ENCODE measurements at regions of chr3 and their contacts with region 1.

Region 1: GRCh38 chr3:49411968-49412631 is at the starts of genes RHOA and TCTA:
- DNase-seq: peak; percentile 98
- H3K4me3 Mint-ChIP-seq: peak within 1 kb of the TSS; percentile 91
- H3K27ac Mint-ChIP-seq: peak within 1 kb of the TSS; percentile 100
- H3K4me1 Mint-ChIP-seq: peaks cover 35% of the 10 kb centered on the region
- H3K27me3 Mint-ChIP-seq: no peaks in the 10 kb centered on the region
- CTCF ChIP-seq: no peak
- total RNA-seq, gene RHOA: 313 and 352 TPM in 2 replicates
- total RNA-seq, gene TCTA: 33.6 and 35.6 TPM in 2 replicates

Region 2: DNA sequence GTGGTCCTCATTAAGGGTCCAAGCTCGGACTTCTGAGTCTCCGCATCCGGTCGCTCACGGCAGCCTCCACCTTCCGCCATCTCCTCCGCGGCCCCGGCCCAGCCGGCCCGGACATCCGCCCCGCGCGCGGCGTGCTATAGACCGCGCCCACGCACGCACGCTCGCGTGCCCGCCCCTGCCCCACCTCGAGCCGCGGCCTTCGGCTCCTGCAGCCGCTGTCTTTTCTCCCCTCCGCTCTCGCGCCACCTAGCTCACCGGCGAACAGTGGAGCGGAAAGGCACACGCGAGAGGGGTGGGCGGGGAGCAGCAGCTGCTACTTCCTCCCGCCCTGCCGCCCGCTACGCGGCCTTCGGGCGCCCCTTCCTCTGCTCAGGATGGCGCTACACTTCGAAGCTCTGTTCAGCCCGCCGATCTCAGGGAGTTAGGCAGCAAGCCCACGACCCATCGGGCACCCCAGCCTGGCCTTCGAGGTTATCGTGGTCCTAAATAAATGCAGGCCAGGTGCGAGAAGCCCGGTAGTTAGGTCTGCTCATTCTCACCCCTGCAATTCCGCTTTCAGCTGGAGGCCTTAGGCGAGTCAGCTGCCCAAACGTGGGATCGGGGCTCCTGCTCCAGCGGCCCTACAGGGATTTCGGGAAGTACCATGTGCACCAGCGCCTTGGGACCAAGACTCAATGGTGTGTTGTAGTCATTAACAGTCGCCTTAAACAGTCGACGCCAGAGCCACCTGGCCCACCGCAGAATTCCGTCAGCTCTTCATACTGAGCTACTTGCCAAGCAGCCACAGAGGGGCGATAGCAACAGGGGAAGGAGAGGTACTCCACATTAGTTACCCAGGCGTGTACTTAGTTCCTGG is 71.9 kb before region 1 on chr3 and contains the start of gene USP4:
- CTCF ChIA-PET with region 1: interaction called, 10 read pairs
- intact Hi-C with region 1: no loop called
- DNase-seq: peak; percentile 90
- H3K4me3 Mint-ChIP-seq: peak within 1 kb of the TSS; percentile 88
- H3K27ac Mint-ChIP-seq: peak within 1 kb of the TSS; percentile 84
- H3K4me1 Mint-ChIP-seq: peaks cover 6% of the 10 kb centered on the region
- H3K27me3 Mint-ChIP-seq: no peaks in the 10 kb centered on the region
- CTCF ChIP-seq: no peak
- total RNA-seq, gene USP4: 40.0 and 43.5 TPM in 2 replicates

Region 3: DNA sequence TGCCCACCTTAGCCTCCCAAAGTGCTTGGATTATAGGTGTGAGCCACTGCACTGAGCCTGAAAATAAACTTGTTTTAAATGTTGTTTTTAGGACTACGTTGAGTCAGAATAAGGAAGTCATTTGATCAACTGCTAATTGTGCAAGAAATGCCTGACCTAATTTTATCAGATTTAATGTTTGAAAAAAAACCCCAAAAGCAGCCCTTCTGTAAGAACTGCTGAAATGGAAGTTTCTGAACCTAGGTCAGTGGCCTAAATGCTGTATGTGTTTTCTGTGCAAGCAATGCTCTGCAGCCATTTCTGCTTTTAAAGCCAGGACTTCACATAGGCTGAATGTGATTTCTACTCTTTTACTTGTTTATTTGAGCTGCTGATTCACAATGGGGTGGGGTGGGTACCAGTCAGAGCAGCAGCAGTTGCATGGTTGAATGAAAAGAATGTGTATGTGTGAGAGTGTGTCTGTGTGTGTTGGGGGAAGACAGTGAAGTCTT is 60.5 kb before region 1 on chr3:
- CTCF ChIA-PET with region 1: interaction called, 3 read pairs
- intact Hi-C with region 1: loop called (anchors 5 kb)
- DNase-seq: peak; percentile 30
- H3K4me3 Mint-ChIP-seq: no peak overlapping the region
- H3K27ac Mint-ChIP-seq: peak overlapping the region; percentile 40
- H3K4me1 Mint-ChIP-seq: peaks cover 33% of the 10 kb centered on the region
- H3K27me3 Mint-ChIP-seq: no peaks in the 10 kb centered on the region
- CTCF ChIP-seq: no peak

Region 4: GRCh38 chr3:49484471-49484870 is 72.4 kb after region 1 on chr3:
- CTCF ChIA-PET with region 1: interaction called, 11 read pairs
- intact Hi-C with region 1: no loop called
- DNase-seq: no peak
- H3K4me3 Mint-ChIP-seq: no peak overlapping the region
- H3K27ac Mint-ChIP-seq: no peak overlapping the region
- H3K4me1 Mint-ChIP-seq: no peaks in the 10 kb centered on the region
- H3K27me3 Mint-ChIP-seq: no peaks in the 10 kb centered on the region
- CTCF ChIP-seq: no peak

Measured in Calu3 (cell line).